ENCODE measurements at regions of chr6 and their contacts with region 1.

Region 1: DNA sequence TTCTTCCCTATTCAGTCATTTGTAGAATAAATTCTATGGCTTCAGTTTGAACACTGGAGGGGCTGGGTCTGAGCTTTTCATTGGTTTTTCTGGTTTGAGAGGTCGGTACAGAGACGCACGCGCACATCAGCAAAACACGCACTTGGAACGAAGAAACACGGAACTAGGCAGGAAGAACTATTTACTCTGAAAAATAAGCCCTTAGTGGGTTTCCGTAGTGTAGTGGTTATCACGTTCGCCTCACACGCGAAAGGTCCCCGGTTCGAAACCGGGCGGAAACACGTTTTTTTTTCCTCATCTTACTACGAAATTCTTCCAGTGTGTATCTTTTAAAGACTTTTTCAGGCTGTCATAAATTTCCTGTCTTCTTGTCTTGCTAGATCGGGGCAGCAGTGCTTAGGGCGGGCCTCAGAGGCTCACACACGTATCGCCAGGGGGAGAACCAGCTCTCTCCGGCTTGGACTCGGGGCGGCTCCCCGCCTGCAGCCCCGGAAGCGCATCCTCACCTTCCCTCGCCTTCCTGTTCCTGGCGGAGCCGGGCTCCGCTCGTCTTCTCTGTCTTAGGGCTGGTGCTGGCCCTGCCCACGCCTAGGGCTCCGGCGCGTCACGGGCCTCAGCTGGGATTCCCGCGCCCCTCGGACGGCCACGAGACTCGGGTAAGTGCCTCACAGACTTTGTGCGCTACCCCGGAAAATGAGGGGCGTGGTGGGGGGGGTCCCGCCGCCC is at the start of gene HMGN4:
- DNase-seq: peak; percentile 92 to 96 (median 95)
- H3K4me3 ChIP-seq: peak within 1 kb of the TSS; percentile 83 to 90
- H3K4me3 Mint-ChIP-seq: peak within 1 kb of the TSS; percentile 89 to 98 (median 93)
- H3K27ac ChIP-seq: peak within 1 kb of the TSS; percentile 90
- H3K27ac Mint-ChIP-seq: peak within 1 kb of the TSS; percentile 94 to 99 (median 97)
- H3K4me1 ChIP-seq: peaks cover 66% of the 10 kb centered on the region
- H3K4me1 Mint-ChIP-seq: peaks cover 38 to 76% (median 56%) of the 10 kb centered on the region in 4 donors
- H3K27me3 ChIP-seq: no peaks in the 10 kb centered on the region
- H3K27me3 Mint-ChIP-seq: peaks cover 3 to 6% of the 10 kb centered on the region in 2 donors
- total RNA-seq, gene HMGN4: 102 to 105 TPM

Region 2: GRCh38 chr6:26196846-26197648 is 341.0 kb before region 1 on chr6:
- CTCF ChIA-PET with region 1: no interaction called
- POLR2A ChIA-PET with region 1: interaction called, 10 read pairs
- intact Hi-C with region 1: no loop called
- DNase-seq: peak; percentile 92 to 93 (median 92)
- H3K4me3 ChIP-seq: peak overlapping the region; percentile 83 to 97
- H3K4me3 Mint-ChIP-seq: peak overlapping the region; percentile 94 to 99 (median 97)
- H3K27ac ChIP-seq: peak overlapping the region; percentile 84
- H3K27ac Mint-ChIP-seq: peak overlapping the region; percentile 96 to 100 (median 98)
- H3K4me1 ChIP-seq: peaks cover 43% of the 10 kb centered on the region
- H3K4me1 Mint-ChIP-seq: peaks cover 23 to 57% (median 41%) of the 10 kb centered on the region in 4 donors
- H3K27me3 ChIP-seq: no peaks in the 10 kb centered on the region
- H3K27me3 Mint-ChIP-seq: no peaks in the 10 kb centered on the region

Region 3: GRCh38 chr6:26312501-26313390 is 225.3 kb before region 1 on chr6:
- CTCF ChIA-PET with region 1: no interaction called
- POLR2A ChIA-PET with region 1: interaction called, 12 read pairs
- intact Hi-C with region 1: no loop called
- DNase-seq: peak; percentile 84 to 88 (median 85)
- H3K4me3 ChIP-seq: peak overlapping the region; percentile 31 to 73
- H3K4me3 Mint-ChIP-seq: peak overlapping the region; percentile 81 to 95 (median 92)
- H3K27ac ChIP-seq: peak overlapping the region; percentile 56
- H3K27ac Mint-ChIP-seq: peak overlapping the region; percentile 92 to 99 (median 96)
- H3K4me1 ChIP-seq: peaks cover 29% of the 10 kb centered on the region
- H3K4me1 Mint-ChIP-seq: peaks cover 29 to 54% (median 39%) of the 10 kb centered on the region in 4 donors
- H3K27me3 ChIP-seq: no peaks in the 10 kb centered on the region
- H3K27me3 Mint-ChIP-seq: peaks cover 0 to 8% of the 10 kb centered on the region in 2 donors

Region 4: GRCh38 chr6:26363882-26364701 is 173.9 kb before region 1 on chr6:
- CTCF ChIA-PET with region 1: no interaction called
- POLR2A ChIA-PET with region 1: interaction called, 10 read pairs
- intact Hi-C with region 1: no loop called
- DNase-seq: peak in 3 of 5 donors; percentile 40 to 44 (median 43)
- H3K4me3 ChIP-seq: peak overlapping the region; percentile 79 to 87
- H3K4me3 Mint-ChIP-seq: peak overlapping the region in 1 of 8 donors; percentile 21
- H3K27ac ChIP-seq: peak overlapping the region; percentile 96
- H3K27ac Mint-ChIP-seq: no peak overlapping the region
- H3K4me1 ChIP-seq: peaks cover 69% of the 10 kb centered on the region
- H3K4me1 Mint-ChIP-seq: peaks cover 45 to 56% (median 52%) of the 10 kb centered on the region in 4 donors
- H3K27me3 ChIP-seq: no peaks in the 10 kb centered on the region
- H3K27me3 Mint-ChIP-seq: no peaks in the 10 kb centered on the region

Region 5: DNA sequence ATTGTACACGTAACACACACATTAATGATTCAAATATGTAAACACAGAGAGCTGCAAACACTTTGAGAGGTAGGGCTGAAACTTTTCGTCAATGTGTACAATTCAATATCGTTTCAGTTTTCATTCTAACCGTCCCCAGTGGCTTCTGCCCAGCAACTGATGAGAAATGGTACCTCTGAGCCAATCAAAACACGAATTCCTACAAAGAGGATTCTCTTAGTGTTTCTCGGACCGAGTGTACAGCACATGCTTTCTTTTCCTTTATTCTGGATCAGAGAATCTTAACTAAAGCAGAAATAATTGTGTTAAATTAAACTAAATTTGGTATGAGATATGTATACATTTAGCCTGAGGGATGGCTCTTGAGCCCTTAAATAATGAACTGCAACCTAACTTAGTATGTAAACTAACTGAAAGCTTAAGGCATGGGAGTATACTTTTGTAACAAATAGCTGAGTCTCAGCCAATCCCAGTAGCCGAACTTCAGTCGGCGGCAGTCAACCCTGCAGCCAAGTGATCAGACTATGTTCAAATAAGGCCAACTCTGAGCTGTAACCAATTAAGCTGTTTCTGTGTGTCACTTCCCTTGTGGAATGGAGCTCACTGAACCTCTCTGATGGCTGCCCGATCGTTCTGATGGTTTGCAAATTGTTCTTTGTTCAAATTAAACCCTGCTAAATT is 64.1 kb before region 1 on chr6:
- CTCF ChIA-PET with region 1: interaction called, 15 read pairs
- POLR2A ChIA-PET with region 1: interaction called, 108 read pairs
- intact Hi-C with region 1: loop called (anchors 1 kb)
- DNase-seq: peak; percentile 91 to 94 (median 92)
- H3K4me3 ChIP-seq: peak overlapping the region; percentile 63 to 73
- H3K4me3 Mint-ChIP-seq: peak overlapping the region; percentile 84 to 99 (median 94)
- H3K27ac ChIP-seq: peak overlapping the region; percentile 81
- H3K27ac Mint-ChIP-seq: peak overlapping the region; percentile 99 to 100 (median 99)
- H3K4me1 ChIP-seq: peaks cover 52% of the 10 kb centered on the region
- H3K4me1 Mint-ChIP-seq: peaks cover 37 to 72% (median 51%) of the 10 kb centered on the region in 4 donors
- H3K27me3 ChIP-seq: no peaks in the 10 kb centered on the region
- H3K27me3 Mint-ChIP-seq: no peaks in the 10 kb centered on the region

Region 6: DNA sequence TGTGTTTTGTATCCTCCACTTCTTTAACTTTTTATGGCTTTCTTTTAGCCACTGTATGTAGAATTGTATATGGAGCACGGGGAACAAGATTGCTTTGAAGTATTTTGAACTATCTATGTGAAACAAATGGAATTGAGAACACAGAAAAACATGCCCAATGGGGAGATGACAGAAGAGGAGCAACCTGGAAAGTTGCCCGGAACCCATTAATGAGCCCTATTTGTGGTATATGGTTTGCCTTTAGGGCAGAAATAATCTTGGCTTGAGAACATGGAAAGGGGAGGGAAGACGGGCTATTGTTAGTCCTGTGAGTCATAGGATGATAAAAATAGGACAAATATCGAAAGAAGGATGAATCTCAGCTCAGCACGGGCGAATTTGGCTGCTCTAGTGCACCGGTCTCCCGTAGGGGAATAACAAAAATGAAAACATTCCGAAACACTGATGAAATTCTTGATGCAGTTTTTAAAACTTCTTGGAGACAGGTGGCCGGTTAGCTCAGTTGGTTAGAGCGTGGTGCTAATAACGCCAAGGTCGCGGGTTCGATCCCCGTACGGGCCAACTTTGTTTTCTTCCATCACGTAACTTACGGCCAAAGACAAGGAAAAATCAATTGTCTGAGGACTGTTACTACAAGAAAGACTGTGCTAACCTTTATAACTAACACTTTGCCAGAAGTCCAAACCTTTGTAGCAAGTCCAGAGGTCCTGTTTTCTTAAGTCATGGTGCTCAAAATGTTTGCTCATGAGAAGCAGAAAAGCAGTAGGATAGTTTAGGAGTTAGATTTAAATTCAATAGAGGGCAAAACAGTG is 15.8 kb after region 1 on chr6:
- CTCF ChIA-PET with region 1: interaction called, 50 read pairs
- POLR2A ChIA-PET with region 1: interaction called, 181 read pairs
- intact Hi-C with region 1: loop called (anchors 1 kb)
- DNase-seq: peak; percentile 83 to 88 (median 86)
- H3K4me3 ChIP-seq: peak overlapping the region; percentile 67 to 93
- H3K4me3 Mint-ChIP-seq: no peak overlapping the region
- H3K27ac ChIP-seq: peak overlapping the region; percentile 31
- H3K27ac Mint-ChIP-seq: no peak overlapping the region
- H3K4me1 ChIP-seq: peaks cover 31% of the 10 kb centered on the region
- H3K4me1 Mint-ChIP-seq: peaks cover 11 to 28% (median 19%) of the 10 kb centered on the region in 4 donors
- H3K27me3 ChIP-seq: no peaks in the 10 kb centered on the region
- H3K27me3 Mint-ChIP-seq: peaks cover 0 to 2% of the 10 kb centered on the region in 2 donors

Region 7: GRCh38 chr6:27479319-27480182 is 941.5 kb after region 1 on chr6:
- CTCF ChIA-PET with region 1: no interaction called
- POLR2A ChIA-PET with region 1: interaction called, 10 read pairs
- intact Hi-C with region 1: no loop called
- DNase-seq: peak; percentile 87 to 93 (median 92)
- H3K4me3 ChIP-seq: peak overlapping the region; percentile 88 to 93
- H3K4me3 Mint-ChIP-seq: no peak overlapping the region
- H3K27ac ChIP-seq: peak overlapping the region; percentile 85
- H3K27ac Mint-ChIP-seq: no peak overlapping the region
- H3K4me1 ChIP-seq: peaks cover 17% of the 10 kb centered on the region
- H3K4me1 Mint-ChIP-seq: peaks cover 0 to 11% (median 5%) of the 10 kb centered on the region in 4 donors
- H3K27me3 ChIP-seq: no peaks in the 10 kb centered on the region
- H3K27me3 Mint-ChIP-seq: no peaks in the 10 kb centered on the region